ENCODE measurements at regions of chr19 and their contacts with region 1.

Region 1: DNA sequence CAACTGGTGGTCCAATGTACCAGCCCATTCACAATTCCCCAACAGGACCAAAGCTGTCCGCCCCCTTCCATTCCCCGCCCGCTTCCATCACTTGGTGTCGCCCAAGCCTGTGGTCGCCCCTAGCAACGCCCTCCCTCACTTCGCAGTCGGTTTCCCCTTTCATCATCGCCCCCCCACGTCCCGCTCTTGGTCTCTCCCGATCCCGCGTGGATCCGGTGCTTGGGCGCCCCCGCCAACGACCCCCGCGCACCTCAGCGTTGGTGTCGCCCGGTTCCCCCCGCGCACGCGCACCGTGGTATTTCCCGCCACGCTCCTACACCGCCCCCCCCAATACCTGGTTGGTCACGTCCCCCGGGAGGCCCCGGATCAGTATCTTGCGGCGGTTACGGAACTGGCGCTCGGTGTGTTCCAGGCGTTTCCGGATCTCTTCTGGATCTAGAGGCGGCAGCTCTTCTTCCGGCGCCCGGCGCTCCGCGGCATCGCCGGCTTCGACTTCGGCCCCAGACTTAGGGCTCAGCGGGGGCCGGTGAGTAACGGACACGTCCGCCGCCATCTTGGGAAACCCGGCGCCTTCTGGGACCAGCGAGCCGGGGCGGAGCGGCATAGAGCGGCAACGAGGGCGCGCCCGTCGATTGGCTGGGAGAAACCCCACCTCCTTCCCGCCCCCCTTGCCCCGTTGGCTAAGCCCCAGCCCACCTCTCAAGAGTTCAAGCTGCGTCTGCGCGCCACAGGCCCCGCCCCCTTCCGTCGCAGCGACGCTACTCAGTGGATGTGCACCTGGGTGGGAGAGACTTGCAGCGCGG is at the start of gene RAVER1:
- DNase-seq: peak; percentile 93
- ATAC-seq: peak; percentile 97
- H3K4me3 Mint-ChIP-seq: peak within 1 kb of the TSS; percentile 96
- H3K27ac Mint-ChIP-seq: peak within 1 kb of the TSS; percentile 96
- H3K4me1 Mint-ChIP-seq: peaks cover 26% of the 10 kb centered on the region
- H3K27me3 Mint-ChIP-seq: no peaks in the 10 kb centered on the region
- CTCF ChIP-seq: no peak
- total RNA-seq, gene RAVER1: 77.0 and 80.8 TPM in 2 replicates

Region 2: GRCh38 chr19:9849786-9850185 is 483.4 kb before region 1 on chr19:
- CTCF ChIA-PET with region 1: no interaction called
- POLR2A ChIA-PET with region 1: interaction called, 10 read pairs
- intact Hi-C with region 1: no loop called
- DNase-seq: no peak
- ATAC-seq: no peak
- H3K4me3 Mint-ChIP-seq: no peak overlapping the region
- H3K27ac Mint-ChIP-seq: no peak overlapping the region
- H3K4me1 Mint-ChIP-seq: no peaks in the 10 kb centered on the region
- H3K27me3 Mint-ChIP-seq: no peaks in the 10 kb centered on the region
- CTCF ChIP-seq: no peak

Region 3: DNA sequence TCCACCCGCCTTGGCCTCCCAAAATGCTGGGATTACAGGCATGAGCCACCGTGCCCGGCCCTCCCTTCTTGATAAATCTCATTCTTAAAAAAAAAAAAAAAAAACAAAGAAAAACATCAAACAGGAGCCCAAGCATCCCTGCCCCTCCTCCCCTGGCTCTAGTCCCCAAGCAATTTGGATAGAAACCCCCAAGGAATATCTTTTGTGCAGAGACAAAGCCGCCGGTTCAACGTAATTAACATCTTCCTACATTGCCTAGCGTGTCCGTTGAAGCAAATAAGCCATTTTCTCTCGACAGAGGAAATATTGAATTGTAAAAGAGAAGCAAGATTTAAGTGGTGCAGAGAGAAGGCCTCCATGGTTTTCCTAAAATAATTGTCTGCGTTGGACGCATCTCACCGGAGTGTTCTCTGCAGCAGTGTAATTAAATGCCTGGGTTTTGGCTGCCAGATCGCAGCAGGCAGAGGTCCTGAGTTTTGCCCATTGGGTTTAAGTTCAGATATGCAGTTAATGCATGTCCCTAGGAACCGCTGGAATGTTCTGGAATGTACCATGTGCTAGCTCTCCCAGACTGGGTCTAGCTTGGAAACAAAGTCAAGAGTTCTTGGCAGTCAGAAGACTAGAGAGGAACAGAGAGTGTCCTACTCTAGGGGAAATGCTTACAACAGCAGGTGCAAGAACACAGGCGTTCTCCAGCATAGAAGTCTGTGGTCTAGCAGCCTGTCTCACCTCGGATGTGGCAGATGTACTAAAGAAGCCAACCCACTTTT is 467.2 kb before region 1 on chr19:
- CTCF ChIA-PET with region 1: no interaction called
- POLR2A ChIA-PET with region 1: no interaction called
- intact Hi-C with region 1: no loop called
- DNase-seq: no peak
- ATAC-seq: no peak
- H3K4me3 Mint-ChIP-seq: no peak overlapping the region
- H3K27ac Mint-ChIP-seq: no peak overlapping the region
- H3K4me1 Mint-ChIP-seq: no peaks in the 10 kb centered on the region
- H3K27me3 Mint-ChIP-seq: no peaks in the 10 kb centered on the region
- CTCF ChIP-seq: no peak

Region 4: GRCh38 chr19:10292206-10292788 is 40.9 kb before region 1 on chr19:
- CTCF ChIA-PET with region 1: no interaction called
- POLR2A ChIA-PET with region 1: interaction called, 22 read pairs
- intact Hi-C with region 1: loop called (anchors 2 kb)
- DNase-seq: peak; percentile 50
- ATAC-seq: peak; percentile 16
- H3K4me3 Mint-ChIP-seq: peak overlapping the region; percentile 73
- H3K27ac Mint-ChIP-seq: peak overlapping the region; percentile 59
- H3K4me1 Mint-ChIP-seq: peaks cover 70% of the 10 kb centered on the region
- H3K27me3 Mint-ChIP-seq: peaks cover 43% of the 10 kb centered on the region
- CTCF ChIP-seq: no peak

Region 5: DNA sequence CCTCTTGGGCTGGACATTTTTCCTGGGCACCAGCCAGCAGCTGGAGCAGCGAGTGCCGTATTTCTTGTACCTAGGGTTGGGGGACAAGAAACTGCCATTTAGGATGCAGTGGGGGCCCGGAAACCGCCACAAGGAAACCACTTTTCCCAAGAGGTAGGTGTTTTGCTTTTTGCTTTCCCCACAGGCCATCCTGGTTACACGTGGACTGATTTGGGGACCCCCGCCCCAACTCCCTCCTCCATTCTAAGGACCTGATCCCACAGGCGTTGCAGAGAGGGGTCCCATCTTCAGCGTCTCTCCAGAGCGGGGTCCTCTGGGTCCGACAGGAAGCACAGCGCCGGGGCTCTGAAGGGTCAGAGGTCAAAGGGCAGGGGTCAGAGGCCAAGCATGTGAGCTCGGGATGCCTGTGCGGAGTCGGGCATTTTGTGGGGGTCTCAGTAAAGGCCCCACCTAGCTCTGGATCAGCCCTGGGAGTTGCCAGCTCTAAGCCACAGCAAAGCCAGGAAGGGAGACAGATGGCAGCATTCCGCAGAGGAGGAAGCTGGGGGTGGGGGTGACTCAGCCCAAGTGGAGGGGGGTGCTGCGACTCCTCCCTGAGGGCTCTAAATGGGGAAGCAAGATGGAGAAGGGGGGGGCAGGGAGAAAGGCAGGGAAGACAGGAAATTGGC is 27.9 kb before region 1 on chr19:
- CTCF ChIA-PET with region 1: no interaction called
- POLR2A ChIA-PET with region 1: no interaction called
- intact Hi-C with region 1: no loop called
- DNase-seq: no peak
- ATAC-seq: no peak
- H3K4me3 Mint-ChIP-seq: no peak overlapping the region
- H3K27ac Mint-ChIP-seq: no peak overlapping the region
- H3K4me1 Mint-ChIP-seq: peaks cover 2% of the 10 kb centered on the region
- H3K27me3 Mint-ChIP-seq: peaks cover 2% of the 10 kb centered on the region
- CTCF ChIP-seq: no peak

Region 6: DNA sequence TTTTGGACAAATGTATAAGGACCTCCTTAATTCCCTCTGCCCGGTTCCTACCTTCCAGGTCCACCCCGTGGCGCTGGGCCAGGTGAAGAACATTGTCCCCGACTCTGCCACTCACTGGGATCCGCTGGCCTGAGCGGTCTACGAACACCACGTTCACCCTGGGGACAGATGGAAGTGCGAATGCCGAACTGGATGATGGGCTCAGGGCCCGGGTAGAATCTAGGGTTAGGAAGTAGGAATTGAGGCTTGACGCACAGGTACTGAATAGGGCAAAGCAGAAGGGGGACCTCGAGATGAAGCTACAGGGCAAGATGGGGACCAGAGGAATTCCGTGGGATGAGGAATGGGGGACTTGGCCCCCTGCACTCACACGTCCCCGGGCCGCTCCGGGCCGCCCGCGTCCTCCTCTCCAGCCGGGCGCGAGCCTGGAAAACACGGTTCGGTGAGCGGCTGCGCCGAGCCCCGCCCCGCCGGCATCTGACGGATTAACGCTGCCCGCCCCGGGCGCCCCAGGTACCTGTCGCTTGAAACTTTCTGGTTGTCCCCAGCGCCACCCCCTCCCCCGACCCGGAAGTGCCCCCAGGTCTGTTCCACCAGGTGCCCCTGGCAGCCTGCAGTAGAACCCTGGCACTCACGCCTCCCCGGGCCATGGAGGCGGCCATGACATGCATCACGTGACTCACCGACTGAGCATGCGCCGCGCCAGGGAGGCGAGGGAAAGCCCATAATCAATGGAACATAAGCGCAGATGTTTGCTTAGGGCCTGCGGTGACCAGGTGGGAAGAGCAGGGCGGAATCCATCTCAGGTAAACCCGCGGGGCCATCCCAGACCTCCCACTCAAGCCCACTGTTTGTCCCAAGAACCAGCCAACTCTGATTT is 17.6 kb before region 1 on chr19 and contains the start of gene FDX2:
- CTCF ChIA-PET with region 1: interaction called, 3 read pairs
- POLR2A ChIA-PET with region 1: interaction called, 10 read pairs
- intact Hi-C with region 1: no loop called
- DNase-seq: peak; percentile 85
- ATAC-seq: peak; percentile 92
- H3K4me3 Mint-ChIP-seq: peak within 1 kb of the TSS; percentile 87
- H3K27ac Mint-ChIP-seq: peak within 1 kb of the TSS; percentile 71
- H3K4me1 Mint-ChIP-seq: peaks cover 15% of the 10 kb centered on the region
- H3K27me3 Mint-ChIP-seq: no peaks in the 10 kb centered on the region
- CTCF ChIP-seq: no peak
- total RNA-seq, gene FDX2: 12.8 and 15.0 TPM in 2 replicates

Region 7: DNA sequence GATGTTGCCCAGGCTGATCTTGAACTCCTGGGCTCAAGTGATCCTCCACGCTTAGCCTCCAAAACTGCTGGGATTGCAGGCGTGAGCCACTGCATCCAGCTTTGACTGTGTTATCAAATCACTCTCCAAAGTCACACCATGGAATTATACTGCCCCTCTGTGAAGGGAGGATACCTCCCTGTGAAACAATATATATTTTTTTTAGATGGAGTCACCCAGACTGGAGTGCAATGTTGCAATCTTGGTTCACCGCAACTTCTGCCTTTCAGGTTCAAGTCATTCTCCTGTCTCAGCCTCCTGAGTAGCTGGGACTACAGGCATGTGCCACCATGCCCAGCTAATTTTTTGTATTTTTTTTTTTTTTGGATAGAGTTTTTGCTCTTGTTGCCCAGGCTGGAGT is 39.5 kb after region 1 on chr19:
- CTCF ChIA-PET with region 1: no interaction called
- POLR2A ChIA-PET with region 1: interaction called, 7 read pairs
- intact Hi-C with region 1: loop called (anchors 5 kb)
- DNase-seq: no peak
- ATAC-seq: no peak
- H3K4me3 Mint-ChIP-seq: no peak overlapping the region
- H3K27ac Mint-ChIP-seq: no peak overlapping the region
- H3K4me1 Mint-ChIP-seq: peaks cover 16% of the 10 kb centered on the region
- H3K27me3 Mint-ChIP-seq: no peaks in the 10 kb centered on the region
- CTCF ChIP-seq: no peak

Region 8: DNA sequence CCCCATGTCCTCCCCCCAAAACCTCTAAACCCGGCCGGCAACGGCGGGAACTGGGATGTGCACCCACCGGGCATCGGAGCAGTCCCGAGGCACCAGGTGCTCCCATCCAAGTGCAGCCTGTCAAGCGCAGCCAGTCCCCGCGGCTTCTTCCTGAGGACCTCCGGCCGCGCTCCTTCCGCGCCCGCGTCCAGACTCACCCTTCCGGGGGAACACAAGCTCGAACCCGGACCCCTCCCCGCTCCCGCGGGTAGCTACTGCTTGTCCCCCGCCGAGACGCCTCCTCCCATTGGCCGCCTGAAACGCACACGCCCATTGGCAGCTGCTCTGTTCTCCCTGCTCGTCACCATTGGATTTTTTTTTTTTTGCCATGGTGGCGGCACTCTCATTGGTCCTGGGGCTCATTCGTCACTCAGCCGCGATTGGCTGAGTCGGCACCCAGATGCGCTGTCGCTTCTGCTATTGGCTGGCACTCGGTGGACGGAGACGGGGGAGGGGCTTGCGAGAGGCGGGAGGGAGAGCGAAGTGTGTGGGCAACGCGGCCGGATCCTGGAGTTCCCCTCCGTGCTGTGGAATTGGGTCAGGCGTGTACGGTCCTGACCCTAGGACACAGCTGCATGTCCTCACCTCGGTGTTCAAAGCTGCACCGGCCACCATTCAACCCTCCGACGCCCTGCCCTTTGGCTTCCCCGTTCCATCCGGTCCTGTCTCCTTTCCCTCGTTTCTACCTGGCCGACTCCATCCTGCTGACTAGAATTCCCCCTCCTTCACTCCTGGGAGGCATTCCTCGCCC is 47.4 kb after region 1 on chr19 and contains the start of gene TYK2:
- CTCF ChIA-PET with region 1: interaction called, 4 read pairs
- POLR2A ChIA-PET with region 1: interaction called, 20 read pairs
- intact Hi-C with region 1: loop called (anchors 2 kb)
- DNase-seq: peak; percentile 95
- ATAC-seq: peak; percentile 93
- H3K4me3 Mint-ChIP-seq: peak within 1 kb of the TSS; percentile 97
- H3K27ac Mint-ChIP-seq: peak within 1 kb of the TSS; percentile 86
- H3K4me1 Mint-ChIP-seq: peaks cover 23% of the 10 kb centered on the region
- H3K27me3 Mint-ChIP-seq: no peaks in the 10 kb centered on the region
- CTCF ChIP-seq: no peak
- total RNA-seq, gene TYK2: 302 and 356 TPM in 2 replicates

Region 9: GRCh38 chr19:10427169-10427568 is 94.0 kb after region 1 on chr19:
- CTCF ChIA-PET with region 1: no interaction called
- POLR2A ChIA-PET with region 1: no interaction called
- intact Hi-C with region 1: no loop called
- DNase-seq: no peak
- ATAC-seq: no peak
- H3K4me3 Mint-ChIP-seq: no peak overlapping the region
- H3K27ac Mint-ChIP-seq: peak overlapping the region; percentile 96
- H3K4me1 Mint-ChIP-seq: peaks cover 87% of the 10 kb centered on the region
- H3K27me3 Mint-ChIP-seq: peaks cover 13% of the 10 kb centered on the region
- CTCF ChIP-seq: no peak

Region 10: GRCh38 chr19:10471909-10472308 is 138.8 kb after region 1 on chr19:
- CTCF ChIA-PET with region 1: no interaction called
- POLR2A ChIA-PET with region 1: no interaction called
- intact Hi-C with region 1: no loop called
- DNase-seq: no peak
- ATAC-seq: no peak
- H3K4me3 Mint-ChIP-seq: no peak overlapping the region
- H3K27ac Mint-ChIP-seq: no peak overlapping the region
- H3K4me1 Mint-ChIP-seq: no peaks in the 10 kb centered on the region
- H3K27me3 Mint-ChIP-seq: no peaks in the 10 kb centered on the region
- CTCF ChIP-seq: no peak

Measured in activated B cell treated with CpG ODN at 0.5 μM for 24 hours (primary cell).